ENCODE measurements at regions of chr18 and their contacts with region 1.

Region 1: DNA sequence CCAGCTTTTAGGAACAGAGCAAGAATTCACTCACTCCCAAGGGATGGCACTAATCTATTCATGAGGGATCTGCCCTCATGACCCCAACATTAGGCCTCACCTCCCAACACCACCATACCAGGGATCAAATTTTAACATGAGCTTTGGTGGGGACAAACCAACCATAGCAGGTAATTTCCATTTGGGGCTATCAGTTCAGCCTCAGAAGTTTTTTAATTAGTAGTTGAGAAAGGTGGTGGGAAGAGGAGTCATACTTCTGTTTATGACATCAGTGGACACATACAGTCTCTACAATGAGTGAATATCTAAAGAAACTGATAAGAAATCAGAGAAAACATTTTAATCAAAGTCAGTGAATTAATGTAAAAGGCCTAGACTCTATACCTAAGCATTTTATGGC is 59.6 kb upstream of the EMILIN2 start:
- DNase-seq: no peak
- ATAC-seq: no peak
- H3K4me3 ChIP-seq: no peak overlapping the region
- H3K27ac ChIP-seq: no peak overlapping the region
- H3K4me1 ChIP-seq: no peaks in the 10 kb centered on the region
- H3K27me3 ChIP-seq: no peaks in the 10 kb centered on the region
- CTCF ChIP-seq: no peak

Region 2: GRCh38 chr18:2083691-2084090 is 703.5 kb before region 1 on chr18:
- CTCF ChIA-PET with region 1: no interaction called
- POLR2A ChIA-PET with region 1: no interaction called
- in situ Hi-C with region 1: no loop called
- intact Hi-C with region 1: no loop called
- DNase-seq: no peak
- ATAC-seq: no peak
- H3K4me3 ChIP-seq: no peak overlapping the region
- H3K27ac ChIP-seq: no peak overlapping the region
- H3K4me1 ChIP-seq: no peaks in the 10 kb centered on the region
- H3K27me3 ChIP-seq: no peaks in the 10 kb centered on the region
- CTCF ChIP-seq: peak; percentile 15

Region 3: DNA sequence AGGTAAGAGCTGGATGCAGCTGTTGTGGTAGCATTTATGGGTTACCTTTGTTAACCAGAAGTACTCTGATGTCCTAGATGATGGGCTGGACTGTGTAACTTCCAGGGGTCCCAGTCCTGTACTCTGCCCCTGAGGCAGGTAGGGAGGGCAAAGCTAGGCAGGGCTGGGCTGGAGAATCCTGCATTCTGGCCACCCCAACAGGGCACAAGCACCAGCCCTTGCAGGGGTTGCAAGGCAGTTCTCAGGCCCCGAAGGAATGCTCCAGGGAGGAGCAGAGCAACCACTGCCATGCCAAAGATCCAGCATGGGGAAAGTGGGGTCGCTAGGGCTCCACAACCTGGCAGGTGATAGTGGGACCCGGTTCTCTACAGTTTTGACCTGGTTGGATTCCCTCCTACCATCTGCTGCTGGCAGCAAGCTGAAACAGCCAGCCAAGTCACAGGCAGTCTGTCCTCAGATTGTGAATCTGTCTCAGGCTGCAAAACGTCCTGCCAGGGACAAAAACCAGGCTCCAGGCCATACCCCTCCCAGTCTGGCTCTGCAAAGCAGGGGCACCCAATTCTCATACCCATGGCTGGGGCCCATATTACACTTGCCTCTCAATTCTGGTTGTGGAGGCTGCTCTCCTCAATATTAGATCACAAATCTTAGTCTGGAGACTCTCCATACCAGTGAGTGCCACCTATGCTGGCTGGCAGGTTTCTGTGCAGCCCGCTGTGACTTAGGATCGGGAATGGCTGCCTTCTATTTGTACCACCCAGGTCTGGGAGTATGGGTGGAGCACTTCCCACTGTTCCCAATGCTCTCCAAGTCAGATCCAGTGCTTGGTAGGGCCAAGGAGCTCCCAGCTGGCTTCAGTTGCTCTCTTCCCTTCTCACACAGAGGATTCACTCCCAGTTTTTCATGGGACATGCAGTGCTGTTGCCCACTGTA is 70.6 kb before region 1 on chr18:
- CTCF ChIA-PET with region 1: no interaction called
- POLR2A ChIA-PET with region 1: interaction called, 10 read pairs
- in situ Hi-C with region 1: no loop called
- intact Hi-C with region 1: no loop called
- DNase-seq: no peak
- ATAC-seq: no peak; the same call in 1 of the 2 replicates
- H3K4me3 ChIP-seq: no peak overlapping the region
- H3K27ac ChIP-seq: no peak overlapping the region
- H3K4me1 ChIP-seq: no peaks in the 10 kb centered on the region
- H3K27me3 ChIP-seq: no peaks in the 10 kb centered on the region
- CTCF ChIP-seq: no peak

Region 4: GRCh38 chr18:3466045-3466444 is 678.8 kb after region 1 on chr18:
- CTCF ChIA-PET with region 1: no interaction called
- POLR2A ChIA-PET with region 1: no interaction called
- in situ Hi-C with region 1: no loop called
- intact Hi-C with region 1: no loop called
- DNase-seq: no peak
- ATAC-seq: peak; percentile 59
- H3K4me3 ChIP-seq: no peak overlapping the region
- H3K27ac ChIP-seq: peak overlapping the region; percentile 94
- H3K4me1 ChIP-seq: peaks cover 43% of the 10 kb centered on the region
- H3K27me3 ChIP-seq: no peaks in the 10 kb centered on the region
- CTCF ChIP-seq: no peak